PC-3 (cell line): ENCODE measurements at regions of chr2 and their contacts with region 1.

Region 1: GRCh38 chr2:179263446-179264367 is 925 bp downstream of the SESTD1 start:
- DNase-seq: peak; percentile 56
- ATAC-seq: peak; percentile 30
- H3K4me3 ChIP-seq: peak overlapping the region; percentile 95
- H3K27ac ChIP-seq: no peak overlapping the region
- H3K4me1 ChIP-seq: peaks cover 28% of the 10 kb centered on the region
- H3K27me3 ChIP-seq: no peaks in the 10 kb centered on the region
- CTCF ChIP-seq: no peak

Region 2: DNA sequence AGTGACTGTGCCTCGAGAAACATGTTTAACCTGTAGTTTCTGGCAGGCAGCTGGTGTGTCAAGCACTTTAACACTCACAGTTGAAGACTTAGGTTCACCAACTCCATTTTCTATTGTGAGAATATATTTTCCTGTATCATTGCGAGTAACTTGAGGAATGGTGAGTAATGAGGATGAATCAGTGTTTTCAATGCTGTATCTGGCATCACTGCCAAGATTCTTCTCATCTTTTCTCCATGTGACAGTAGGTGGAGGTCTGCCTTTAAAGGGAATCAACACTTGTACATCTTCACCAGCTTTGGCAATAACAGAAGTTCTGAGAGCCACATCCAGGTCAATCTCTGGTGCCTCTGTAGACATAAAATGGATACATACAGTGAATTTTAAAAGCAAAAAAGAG is 710.7 kb before region 1 on chr2:
- CTCF ChIA-PET with region 1: no interaction called
- POLR2A ChIA-PET with region 1: no interaction called
- intact Hi-C with region 1: no loop called
- DNase-seq: peak; percentile 86
- ATAC-seq: peak; percentile 94
- H3K4me3 ChIP-seq: no peak overlapping the region
- H3K27ac ChIP-seq: peak overlapping the region; percentile 33
- H3K4me1 ChIP-seq: peaks cover 14% of the 10 kb centered on the region
- H3K27me3 ChIP-seq: no peaks in the 10 kb centered on the region
- CTCF ChIP-seq: no peak

Region 3: GRCh38 chr2:179239195-179239594 is 24.5 kb before region 1 on chr2:
- CTCF ChIA-PET with region 1: no interaction called
- POLR2A ChIA-PET with region 1: no interaction called
- intact Hi-C with region 1: loop called (anchors 1 kb)
- DNase-seq: peak; percentile 80
- ATAC-seq: peak; percentile 65
- H3K4me3 ChIP-seq: peak overlapping the region; percentile 33; the same call in 1 of the 2 replicates
- H3K27ac ChIP-seq: peak overlapping the region; percentile 60
- H3K4me1 ChIP-seq: peaks cover 62% of the 10 kb centered on the region
- H3K27me3 ChIP-seq: no peaks in the 10 kb centered on the region
- CTCF ChIP-seq: no peak

Region 4: DNA sequence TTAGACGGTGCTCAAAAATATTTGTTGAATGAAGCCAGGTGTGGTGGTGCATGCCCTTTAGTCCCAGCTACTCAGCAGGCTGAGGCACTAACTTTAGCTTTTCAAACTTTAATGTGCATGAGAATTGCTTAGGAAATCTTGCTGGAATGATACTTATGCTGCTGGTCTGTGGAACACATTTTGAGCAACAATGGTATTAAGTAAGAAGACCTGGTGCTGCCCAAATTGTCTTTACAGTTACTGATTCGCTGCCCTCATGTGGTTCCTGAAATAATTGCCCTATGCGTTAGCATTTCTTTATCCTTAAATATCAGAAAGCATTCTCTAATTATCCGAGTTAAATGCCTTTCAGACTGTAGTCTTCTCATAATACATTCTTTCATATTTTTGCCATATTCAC is 77.0 kb after region 1 on chr2:
- CTCF ChIA-PET with region 1: no interaction called
- POLR2A ChIA-PET with region 1: no interaction called
- intact Hi-C with region 1: loop called (anchors 1 kb)
- DNase-seq: peak; percentile 56
- ATAC-seq: peak; percentile 32; the same call in 1 of the 2 replicates
- H3K4me3 ChIP-seq: no peak overlapping the region
- H3K27ac ChIP-seq: no peak overlapping the region
- H3K4me1 ChIP-seq: peaks cover 20% of the 10 kb centered on the region
- H3K27me3 ChIP-seq: no peaks in the 10 kb centered on the region
- CTCF ChIP-seq: peak; percentile 64

Region 5: GRCh38 chr2:179837408-179837807 is 573.7 kb after region 1 on chr2:
- CTCF ChIA-PET with region 1: no interaction called
- POLR2A ChIA-PET with region 1: no interaction called
- intact Hi-C with region 1: no loop called
- DNase-seq: peak; percentile 77
- ATAC-seq: peak; percentile 89
- H3K4me3 ChIP-seq: peak overlapping the region; percentile 25; the same call in 1 of the 2 replicates
- H3K27ac ChIP-seq: no peak overlapping the region
- H3K4me1 ChIP-seq: peaks cover 11% of the 10 kb centered on the region
- H3K27me3 ChIP-seq: no peaks in the 10 kb centered on the region
- CTCF ChIP-seq: no peak